ENCODE measurements at regions of chr1 and their contacts with region 1.

Region 1: DNA sequence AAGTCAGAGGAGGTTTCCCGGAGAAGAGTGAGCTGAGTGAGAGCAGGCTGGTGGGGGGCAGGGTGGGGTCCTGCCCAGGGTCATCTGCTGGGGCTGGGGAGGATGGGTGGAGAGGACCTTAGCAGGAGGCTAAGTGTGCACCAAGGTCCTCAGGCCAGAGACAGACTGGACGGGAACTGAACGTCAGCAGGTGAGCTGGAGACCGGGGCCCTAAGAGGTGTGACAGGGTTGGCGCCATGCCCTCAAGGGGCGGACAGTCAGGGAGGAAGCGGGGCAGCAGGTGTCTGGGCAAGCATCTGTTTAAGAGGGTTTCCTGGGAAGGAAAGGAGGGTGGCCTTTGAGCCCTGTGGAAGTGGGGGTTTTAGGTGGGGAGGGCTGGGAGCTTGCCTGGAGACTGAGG is 13.6 kb upstream of the PTPN7 start:
- DNase-seq: no peak
- H3K4me3 ChIP-seq: no peak overlapping the region
- H3K27ac ChIP-seq: no peak overlapping the region
- H3K4me1 ChIP-seq: no peaks in the 10 kb centered on the region
- H3K27me3 ChIP-seq: no peaks in the 10 kb centered on the region
- CTCF ChIP-seq: no peak
- POLR2A ChIP-seq: no peak

Region 2: DNA sequence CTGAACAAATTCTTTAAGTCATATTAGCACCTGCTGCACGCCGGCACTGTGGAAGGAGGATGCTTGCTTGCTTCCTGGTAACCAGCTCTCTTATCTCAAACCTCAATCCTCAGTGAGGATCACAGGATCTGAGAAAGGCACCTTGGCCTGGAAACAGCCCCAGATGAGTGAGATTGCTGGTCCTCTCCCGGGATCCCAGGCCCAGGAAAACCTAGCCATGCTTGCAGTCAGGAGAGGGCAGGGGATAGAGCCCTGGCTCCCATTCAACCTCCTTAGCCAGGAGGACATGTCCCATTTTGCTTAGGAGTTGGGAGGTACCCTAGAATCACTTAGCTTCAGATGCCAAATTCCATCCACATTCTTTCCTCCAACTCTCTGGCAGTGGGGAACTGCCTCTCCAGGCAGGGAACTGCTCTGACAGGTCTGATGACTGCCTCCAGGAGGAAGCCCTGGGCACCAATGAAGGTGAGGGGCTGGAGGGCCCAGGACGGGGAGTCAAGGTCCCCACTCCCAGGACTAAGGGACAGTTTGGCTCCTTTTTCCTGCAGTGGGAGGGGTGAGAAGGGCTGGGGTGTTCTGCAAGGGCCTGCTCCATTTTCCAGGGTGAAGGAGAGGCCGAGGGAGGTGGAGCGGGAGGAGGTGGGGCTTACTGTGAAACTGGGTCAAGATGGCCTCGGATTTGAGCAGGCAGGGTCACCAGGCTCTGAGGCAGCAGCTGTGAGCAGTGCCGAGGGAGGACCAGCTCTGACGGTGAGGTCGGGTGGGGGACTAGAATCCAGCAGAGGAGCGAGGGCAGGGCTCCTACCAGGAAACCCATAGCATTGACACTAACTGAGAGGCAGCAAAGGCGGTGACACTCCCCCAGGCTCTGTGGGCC is 41.7 kb before region 1 on chr1:
- intact Hi-C with region 1: no loop called
- DNase-seq: peak; percentile 74 to 83
- H3K4me3 ChIP-seq: peak overlapping the region in 2 of 3 donors; percentile 24 to 30
- H3K27ac ChIP-seq: peak overlapping the region; percentile 96 to 98
- H3K4me1 ChIP-seq: peaks cover 14 to 50% of the 10 kb centered on the region in 2 donors
- H3K27me3 ChIP-seq: no peaks in the 10 kb centered on the region
- CTCF ChIP-seq: no peak
- POLR2A ChIP-seq: no peak

Region 3: DNA sequence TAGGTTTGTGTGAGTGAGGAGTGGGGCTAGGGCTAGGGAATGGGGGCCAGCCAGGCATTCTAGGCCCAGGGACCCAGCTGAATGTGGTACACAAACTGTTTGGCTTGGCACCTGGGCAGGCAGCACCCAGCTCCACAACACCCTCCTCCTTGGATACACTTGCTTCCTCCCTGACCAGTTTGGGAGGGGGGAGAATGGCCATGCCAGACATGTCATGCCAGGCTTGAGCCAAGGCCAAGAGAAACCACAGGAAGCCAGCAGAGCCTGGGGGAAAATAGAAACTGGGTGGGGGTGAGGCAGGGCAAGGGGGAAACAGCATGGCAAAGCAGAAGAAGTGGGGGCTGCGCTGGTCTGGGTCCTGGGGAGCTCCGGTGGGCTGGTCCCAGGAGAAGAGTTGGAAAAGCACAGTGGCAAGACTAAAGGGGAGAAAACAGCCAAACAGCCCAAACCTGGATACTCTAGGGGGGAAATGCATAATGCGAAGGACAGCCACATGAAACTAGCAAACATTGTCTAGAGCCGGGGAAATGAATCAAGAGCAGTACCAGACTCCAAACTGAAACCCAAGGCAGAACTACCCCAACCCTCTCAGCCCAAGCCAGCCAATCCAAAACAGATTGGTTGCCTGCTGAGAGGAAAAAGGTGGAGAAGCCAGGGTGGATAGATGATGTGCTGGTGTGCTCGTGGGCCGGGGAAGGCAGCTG is 67.5 kb after region 1 on chr1:
- intact Hi-C with region 1: loop called (anchors 2 kb)
- DNase-seq: peak; percentile 72
- H3K4me3 ChIP-seq: peak overlapping the region in 1 of 3 donors; percentile 7
- H3K27ac ChIP-seq: peak overlapping the region; percentile 31 to 49
- H3K4me1 ChIP-seq: no peaks in the 10 kb centered on the region
- H3K27me3 ChIP-seq: no peaks in the 10 kb centered on the region
- CTCF ChIP-seq: no peak
- POLR2A ChIP-seq: no peak